ENCODE measurements at regions of chr6 and their contacts with region 1.

Region 1: GRCh38 chr6:3410385-3411360 is 46.2 kb downstream of the SLC22A23 start:
- DNase-seq: peak; percentile 78 to 91 (median 84)
- ATAC-seq: peak; percentile 85
- H3K4me3 ChIP-seq: no peak overlapping the region
- H3K27ac ChIP-seq: no peak overlapping the region
- H3K4me1 ChIP-seq: peaks cover 40 to 60% of the 10 kb centered on the region in 2 experiments
- H3K27me3 ChIP-seq: no peaks in the 10 kb centered on the region
- CTCF ChIP-seq: peak; percentile 88 to 97 (median 88)
- EP300 ChIP-seq: no peak; the same call in 1 of the 2 replicates
- POLR2A ChIP-seq: no peak
- RAD21 ChIP-seq: peak; percentile 72 to 88

Region 2: GRCh38 chr6:2881423-2881822 is 529.2 kb before region 1 on chr6:
- CTCF ChIA-PET with region 1: no interaction called
- POLR2A ChIA-PET with region 1: no interaction called
- in situ Hi-C with region 1: no loop called
- intact Hi-C with region 1: no loop called
- DNase-seq: no peak
- ATAC-seq: no peak
- H3K4me3 ChIP-seq: no peak overlapping the region
- H3K27ac ChIP-seq: no peak overlapping the region
- H3K4me1 ChIP-seq: no peaks in the 10 kb centered on the region; a peak in 2 of 5 replicates
- H3K27me3 ChIP-seq: no peaks in the 10 kb centered on the region
- CTCF ChIP-seq: no peak
- EP300 ChIP-seq: no peak
- POLR2A ChIP-seq: no peak
- RAD21 ChIP-seq: no peak

Region 3: GRCh38 chr6:3068329-3069214 is 342.1 kb before region 1 on chr6 and contains the start of gene RIPK1:
- CTCF ChIA-PET with region 1: no interaction called
- POLR2A ChIA-PET with region 1: no interaction called
- in situ Hi-C with region 1: no loop called
- intact Hi-C with region 1: no loop called
- DNase-seq: peak; percentile 96 to 98 (median 96)
- ATAC-seq: peak; percentile 85
- H3K4me3 ChIP-seq: peak within 1 kb of the TSS; percentile 84
- H3K27ac ChIP-seq: peak within 1 kb of the TSS; percentile 97
- H3K4me1 ChIP-seq: peaks cover 19 to 30% of the 10 kb centered on the region in 2 experiments
- H3K27me3 ChIP-seq: no peaks in the 10 kb centered on the region
- CTCF ChIP-seq: peak; percentile 57 to 68 (median 59); a peak in 5 of 6 replicates
- EP300 ChIP-seq: peak; percentile 51
- POLR2A ChIP-seq: peak; percentile 95
- RAD21 ChIP-seq: peak in 1 of 2 experiments; percentile 34; a peak in 3 of 4 replicates
- polyA plus RNA-seq, gene RIPK1: 3.8 to 4.5 TPM

Region 4: DNA sequence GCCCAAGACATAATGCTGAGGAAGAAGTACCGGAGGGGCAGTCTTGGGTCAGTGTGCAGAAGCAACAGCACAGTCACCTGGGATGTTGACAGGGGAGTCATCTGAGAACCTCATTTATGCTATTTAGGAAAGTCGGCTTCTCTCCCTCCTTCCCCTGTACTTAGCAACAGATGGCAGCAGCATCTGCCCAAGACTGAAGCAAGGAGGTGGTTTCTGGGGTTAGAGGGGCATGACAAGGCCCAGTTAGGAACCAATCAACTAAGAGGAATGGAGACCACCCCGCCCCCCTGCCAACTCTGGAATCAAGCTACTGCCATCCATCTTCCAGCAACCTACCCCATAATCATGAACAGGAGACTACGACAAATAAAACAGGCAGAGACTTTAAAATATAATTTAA is 320.7 kb before region 1 on chr6:
- CTCF ChIA-PET with region 1: no interaction called
- POLR2A ChIA-PET with region 1: no interaction called
- in situ Hi-C with region 1: no loop called
- intact Hi-C with region 1: no loop called
- DNase-seq: no peak
- ATAC-seq: no peak
- H3K4me3 ChIP-seq: no peak overlapping the region
- H3K27ac ChIP-seq: no peak overlapping the region
- H3K4me1 ChIP-seq: no peaks in the 10 kb centered on the region
- H3K27me3 ChIP-seq: no peaks in the 10 kb centered on the region
- CTCF ChIP-seq: no peak
- EP300 ChIP-seq: no peak
- POLR2A ChIP-seq: no peak
- RAD21 ChIP-seq: no peak

Region 5: GRCh38 chr6:3312604-3313231 is 98.0 kb before region 1 on chr6:
- CTCF ChIA-PET with region 1: no interaction called
- POLR2A ChIA-PET with region 1: no interaction called
- in situ Hi-C with region 1: no loop called
- intact Hi-C with region 1: no loop called
- DNase-seq: no peak
- ATAC-seq: peak; percentile 27
- H3K4me3 ChIP-seq: no peak overlapping the region
- H3K27ac ChIP-seq: no peak overlapping the region
- H3K4me1 ChIP-seq: peaks cover 0 to 3% of the 10 kb centered on the region in 2 experiments; a peak in 1 of 5 replicates
- H3K27me3 ChIP-seq: no peaks in the 10 kb centered on the region
- CTCF ChIP-seq: no peak
- EP300 ChIP-seq: no peak
- POLR2A ChIP-seq: no peak
- RAD21 ChIP-seq: no peak

Region 6: DNA sequence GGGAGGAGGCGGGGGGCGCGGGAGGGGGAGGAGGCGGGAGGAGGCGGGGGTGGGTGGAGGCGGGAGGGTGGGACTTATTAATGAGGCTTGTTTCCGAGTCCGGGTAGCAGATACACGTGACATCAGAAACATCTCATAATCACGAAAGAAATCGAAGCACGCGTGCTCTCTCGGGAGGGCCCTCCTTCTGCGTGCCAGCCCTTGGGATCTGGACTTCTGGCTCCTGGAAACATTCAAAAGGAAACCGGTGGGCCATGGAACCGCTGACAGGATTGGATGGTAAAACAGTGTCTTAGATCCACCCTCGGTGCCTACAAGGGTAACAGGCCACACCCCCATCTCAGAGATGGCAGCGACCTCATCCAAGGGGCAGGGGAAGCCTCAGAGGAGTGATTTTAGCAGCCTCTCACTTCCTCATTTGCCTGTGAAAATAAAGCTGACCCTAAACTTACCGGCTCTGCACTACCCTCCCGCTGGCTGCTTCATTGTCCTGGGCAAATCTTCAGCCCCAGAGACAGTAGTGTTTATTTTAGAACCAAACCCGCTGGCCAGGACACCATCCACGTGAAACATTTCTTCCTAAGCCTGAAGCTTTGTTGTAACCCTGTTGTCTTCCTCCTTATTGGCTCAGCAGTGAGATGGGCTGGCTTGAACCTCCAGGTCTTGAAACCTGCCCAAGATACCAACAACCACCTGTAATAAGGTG is 54.5 kb before region 1 on chr6:
- CTCF ChIA-PET with region 1: no interaction called
- POLR2A ChIA-PET with region 1: no interaction called
- in situ Hi-C with region 1: no loop called
- intact Hi-C with region 1: loop called (anchors 2 kb)
- DNase-seq: peak; percentile 78 to 96 (median 94)
- ATAC-seq: peak; percentile 60
- H3K4me3 ChIP-seq: peak overlapping the region; percentile 14; the same call in 1 of the 2 replicates
- H3K27ac ChIP-seq: peak overlapping the region; percentile 96
- H3K4me1 ChIP-seq: peaks cover 30 to 56% of the 10 kb centered on the region in 2 experiments
- H3K27me3 ChIP-seq: no peaks in the 10 kb centered on the region
- CTCF ChIP-seq: no peak
- EP300 ChIP-seq: 0 out of 2 replicates have a peak, but pooled peaks have one; percentile 17
- POLR2A ChIP-seq: no peak
- RAD21 ChIP-seq: no peak

Region 7: DNA sequence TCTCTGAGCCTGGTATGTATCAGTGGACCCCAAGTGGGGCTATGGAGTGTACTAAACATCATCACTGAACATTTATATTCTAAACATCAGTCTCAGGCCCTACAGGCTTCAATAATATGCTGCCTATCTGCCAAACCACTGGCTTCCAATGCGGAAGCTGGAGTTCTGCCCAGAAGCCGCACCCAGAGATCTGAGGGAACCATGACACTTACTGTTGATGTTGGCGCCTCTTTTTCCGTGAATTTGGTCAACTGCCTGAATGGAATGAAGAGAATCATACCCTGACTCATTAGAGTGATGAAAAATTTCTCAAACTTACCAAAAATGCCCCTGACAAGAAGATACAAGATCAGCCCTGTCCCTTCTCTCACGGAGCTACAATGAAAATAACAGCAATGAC is 20.0 kb before region 1 on chr6:
- CTCF ChIA-PET with region 1: no interaction called
- POLR2A ChIA-PET with region 1: interaction called, 3 read pairs
- in situ Hi-C with region 1: no loop called
- intact Hi-C with region 1: loop called (anchors 2 kb)
- DNase-seq: peak; percentile 60 to 82 (median 80)
- ATAC-seq: peak; percentile 40
- H3K4me3 ChIP-seq: no peak overlapping the region
- H3K27ac ChIP-seq: peak overlapping the region; percentile 53; the same call in 2 of the 3 replicates
- H3K4me1 ChIP-seq: peaks cover 48 to 52% of the 10 kb centered on the region in 2 experiments
- H3K27me3 ChIP-seq: no peaks in the 10 kb centered on the region
- CTCF ChIP-seq: no peak
- EP300 ChIP-seq: peak; percentile 64; the same call in 1 of the 2 replicates
- POLR2A ChIP-seq: no peak
- RAD21 ChIP-seq: no peak

Region 8: DNA sequence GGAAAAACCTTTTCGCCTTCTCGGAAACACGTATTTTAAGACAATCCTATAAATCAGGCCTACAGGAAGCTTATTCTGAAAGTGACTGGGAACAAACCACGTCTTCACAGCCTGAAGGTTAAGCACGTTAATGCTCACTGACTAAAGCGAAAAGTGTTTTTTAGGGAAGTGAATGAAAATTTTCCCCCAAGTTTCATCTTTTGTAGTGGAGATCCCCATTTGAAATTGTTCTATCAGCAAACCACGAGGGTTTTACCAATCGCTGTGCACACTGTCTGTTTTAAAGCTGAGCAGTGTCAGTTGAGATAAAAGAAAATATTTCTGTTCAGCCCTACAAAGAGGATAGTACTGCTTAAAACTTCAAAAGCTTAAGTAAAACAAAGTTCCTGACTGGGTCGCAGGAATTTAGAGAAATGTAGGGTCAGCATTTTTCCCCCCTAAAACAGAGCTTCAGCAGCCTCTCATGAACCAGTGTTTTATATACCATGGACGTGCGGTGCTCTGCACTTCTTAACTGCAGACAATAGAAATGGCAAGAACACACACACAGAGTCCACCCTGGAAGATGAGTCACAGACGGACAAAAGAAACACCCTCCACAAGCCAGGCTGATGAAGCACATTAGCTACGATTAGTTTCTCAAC is 11.2 kb after region 1 on chr6:
- CTCF ChIA-PET with region 1: no interaction called
- POLR2A ChIA-PET with region 1: interaction called, 15 read pairs
- in situ Hi-C with region 1: no loop called
- intact Hi-C with region 1: no loop called
- DNase-seq: peak; percentile 33 to 62 (median 48)
- ATAC-seq: peak; percentile 82
- H3K4me3 ChIP-seq: no peak overlapping the region
- H3K27ac ChIP-seq: no peak overlapping the region; the same call in 2 of the 3 replicates
- H3K4me1 ChIP-seq: peaks cover 11 to 43% of the 10 kb centered on the region in 2 experiments; a peak in 4 of 5 replicates
- H3K27me3 ChIP-seq: no peaks in the 10 kb centered on the region
- CTCF ChIP-seq: no peak
- EP300 ChIP-seq: 0 out of 2 replicates have a peak, but pooled peaks have one; percentile 8
- POLR2A ChIP-seq: no peak
- RAD21 ChIP-seq: no peak

Region 9: DNA sequence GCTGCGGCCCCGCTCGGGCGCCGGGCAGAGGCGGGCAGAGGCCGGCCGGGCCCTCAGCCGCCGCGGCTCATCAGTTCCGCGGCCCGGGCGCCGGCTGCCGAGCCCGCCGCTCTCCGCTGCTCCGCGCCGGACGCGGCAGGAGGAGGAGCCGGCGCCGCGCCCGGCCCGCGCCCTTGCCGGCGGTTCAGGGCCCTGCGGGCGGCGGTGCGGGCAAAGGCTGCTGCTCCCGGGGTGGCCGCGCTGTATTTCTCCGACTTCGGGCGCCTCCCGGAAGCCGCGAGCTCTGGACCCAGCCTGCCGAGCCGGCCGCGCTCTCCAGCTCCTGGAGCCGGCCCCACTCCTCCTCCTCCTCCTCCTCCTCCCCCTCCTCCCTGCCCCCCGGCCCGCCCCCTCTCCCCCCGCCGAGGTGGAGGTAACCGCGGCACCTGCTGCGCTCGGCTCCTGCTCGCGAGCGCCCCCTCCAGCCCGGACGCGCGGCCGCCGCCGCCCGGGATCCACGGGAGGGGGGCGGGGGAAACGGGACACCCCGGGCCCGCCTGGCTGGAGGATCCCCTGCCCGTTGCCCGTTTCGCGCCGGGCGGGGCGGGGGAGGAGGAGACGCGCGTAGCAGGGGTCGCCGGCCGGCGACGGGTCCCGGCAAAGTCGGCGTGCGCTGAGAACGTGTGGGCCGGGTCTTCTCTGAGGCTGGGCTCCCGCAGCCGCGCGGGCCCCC is 46.2 kb after region 1 on chr6 and contains the start of gene SLC22A23:
- CTCF ChIA-PET with region 1: no interaction called
- POLR2A ChIA-PET with region 1: no interaction called
- in situ Hi-C with region 1: no loop called
- intact Hi-C with region 1: loop called (anchors 2 kb)
- DNase-seq: peak; percentile 86 to 99 (median 98)
- ATAC-seq: peak; percentile 80
- H3K4me3 ChIP-seq: peak within 1 kb of the TSS; percentile 50
- H3K27ac ChIP-seq: no peak within 1 kb of the TSS; the same call in 1 of the 3 replicates
- H3K4me1 ChIP-seq: peaks cover 24 to 45% of the 10 kb centered on the region in 2 experiments
- H3K27me3 ChIP-seq: 0 out of 5 replicates have a peak, but pooled peaks cover 0 to 7% of the 10 kb centered on the region in 2 experiments
- CTCF ChIP-seq: peak; percentile 57 to 83 (median 64); a peak in 5 of 6 replicates
- EP300 ChIP-seq: no peak
- POLR2A ChIP-seq: no peak
- RAD21 ChIP-seq: peak in 1 of 2 experiments; percentile 55; a peak in 3 of 4 replicates
- polyA plus RNA-seq, gene SLC22A23: 0.30 to 0.32 TPM

Region 10: GRCh38 chr6:3510178-3510976 is 99.7 kb after region 1 on chr6:
- CTCF ChIA-PET with region 1: no interaction called
- POLR2A ChIA-PET with region 1: no interaction called
- in situ Hi-C with region 1: no loop called
- intact Hi-C with region 1: loop called (anchors 2 kb)
- DNase-seq: no peak
- ATAC-seq: 0 out of 3 replicates have a peak, but pooled peaks have one; percentile 6
- H3K4me3 ChIP-seq: no peak overlapping the region
- H3K27ac ChIP-seq: no peak overlapping the region
- H3K4me1 ChIP-seq: peaks cover 9% of the 10 kb centered on the region in 2 experiments; a peak in 4 of 5 replicates
- H3K27me3 ChIP-seq: peaks cover 25 to 62% of the 10 kb centered on the region in 2 experiments
- CTCF ChIP-seq: no peak
- EP300 ChIP-seq: no peak
- POLR2A ChIP-seq: no peak
- RAD21 ChIP-seq: no peak